Activated CD4-positive, alpha-beta T cell treated with anti-CD3 and anti-CD28 coated beads, Interleukin-2, amount 10 ng/mL, durations not matched to agents 24 days and 14 days (primary cell): ENCODE measurements at regions of chr19 and their contacts with region 1.

Region 1: DNA sequence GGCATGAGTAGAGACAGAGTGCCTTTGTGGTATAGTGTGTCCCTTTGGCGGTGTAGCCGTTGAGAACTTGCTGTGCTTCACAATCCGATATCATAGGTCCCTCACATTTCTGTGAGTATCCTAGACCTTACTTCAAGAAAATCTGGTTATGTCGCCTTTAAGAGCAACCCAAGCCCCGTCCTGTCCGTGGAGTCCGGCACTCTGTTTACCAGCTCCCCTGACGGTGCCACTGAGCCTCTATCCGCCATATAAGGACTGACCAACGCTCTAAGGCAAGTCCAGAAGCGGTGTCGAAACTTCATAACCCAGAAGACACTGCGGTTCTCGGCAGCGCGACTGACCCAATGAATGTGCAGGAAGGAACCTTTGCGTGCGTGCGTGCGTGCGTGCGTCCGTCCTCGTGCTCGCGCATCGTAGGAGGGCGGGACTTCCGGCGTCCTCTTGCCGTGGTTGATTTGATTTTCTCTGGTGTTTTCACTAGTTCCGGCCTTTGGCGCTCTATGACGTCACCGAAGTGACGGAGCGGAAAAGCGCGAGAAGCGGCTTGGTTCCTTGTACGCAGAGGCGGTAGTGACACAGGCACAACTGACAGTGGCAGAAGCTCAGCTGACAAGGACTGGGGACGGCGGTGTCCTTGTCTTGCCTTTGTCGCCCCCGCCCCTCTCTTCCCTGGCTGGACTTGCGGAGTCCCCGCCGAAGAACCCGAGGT is at the starts of genes TRAPPC2B and ZNF547:
- DNase-seq: peak; percentile 100
- H3K4me3 Mint-ChIP-seq: peak within 1 kb of the TSS; percentile 87
- H3K27ac Mint-ChIP-seq: peak within 1 kb of the TSS; percentile 92
- H3K4me1 Mint-ChIP-seq: peaks cover 14% of the 10 kb centered on the region
- H3K27me3 Mint-ChIP-seq: peaks cover 3% of the 10 kb centered on the region
- total RNA-seq, gene TRAPPC2B: 4.1 and 4.3 TPM in 2 replicates
- total RNA-seq, gene ZNF547: 1.3 and 1.6 TPM in 2 replicates

Region 2: DNA sequence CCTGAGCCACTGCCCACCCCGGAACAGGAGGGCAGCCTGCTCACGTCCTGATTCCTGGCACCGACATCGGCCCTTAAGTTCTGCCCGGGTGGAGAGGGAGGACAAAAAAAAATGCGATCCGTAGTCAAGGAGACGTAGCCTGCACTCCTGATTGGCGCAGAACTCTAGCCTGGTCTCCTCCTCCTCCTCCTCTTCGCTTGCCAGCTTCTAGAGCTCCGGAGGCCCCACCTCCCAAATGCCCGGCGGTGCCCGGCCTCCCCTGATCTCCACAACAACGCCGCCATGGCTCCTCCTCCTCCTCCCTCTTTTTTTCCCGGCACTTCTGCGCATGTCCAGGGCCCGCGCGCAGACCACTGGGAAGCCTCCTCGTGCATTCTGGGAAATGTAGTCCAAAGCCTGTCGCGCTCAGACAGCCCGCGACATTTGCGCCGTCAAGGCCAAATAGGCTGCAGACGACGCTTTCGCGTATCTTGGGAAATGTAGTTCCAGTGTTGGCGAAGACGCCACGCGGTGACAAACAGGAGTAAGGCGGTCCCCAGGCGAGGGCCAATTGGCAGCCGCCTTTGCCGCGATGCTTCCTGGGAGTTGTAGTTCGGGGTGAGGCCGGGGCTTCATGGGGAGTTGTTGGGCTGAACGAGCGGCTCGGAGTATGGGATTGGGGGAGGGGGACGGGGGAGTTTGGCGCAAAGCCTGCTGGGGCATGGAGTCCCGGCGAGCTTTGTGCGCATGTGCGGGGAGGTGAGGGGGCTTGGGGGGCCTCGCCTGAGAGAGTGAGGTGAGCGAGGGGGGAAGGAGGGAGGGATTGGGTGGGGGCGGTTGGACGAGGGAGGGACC is 1222.4 kb before region 1 on chr19 and contains the start of gene ZNF444:
- intact Hi-C with region 1: loop called (anchors 5 kb)
- DNase-seq: peak; percentile 100
- H3K4me3 Mint-ChIP-seq: peak within 1 kb of the TSS; percentile 94
- H3K27ac Mint-ChIP-seq: peak within 1 kb of the TSS; percentile 91
- H3K4me1 Mint-ChIP-seq: peaks cover 36% of the 10 kb centered on the region
- H3K27me3 Mint-ChIP-seq: peaks cover 4% of the 10 kb centered on the region
- total RNA-seq, gene ZNF444: 35.5 and 35.7 TPM in 2 replicates

Region 3: DNA sequence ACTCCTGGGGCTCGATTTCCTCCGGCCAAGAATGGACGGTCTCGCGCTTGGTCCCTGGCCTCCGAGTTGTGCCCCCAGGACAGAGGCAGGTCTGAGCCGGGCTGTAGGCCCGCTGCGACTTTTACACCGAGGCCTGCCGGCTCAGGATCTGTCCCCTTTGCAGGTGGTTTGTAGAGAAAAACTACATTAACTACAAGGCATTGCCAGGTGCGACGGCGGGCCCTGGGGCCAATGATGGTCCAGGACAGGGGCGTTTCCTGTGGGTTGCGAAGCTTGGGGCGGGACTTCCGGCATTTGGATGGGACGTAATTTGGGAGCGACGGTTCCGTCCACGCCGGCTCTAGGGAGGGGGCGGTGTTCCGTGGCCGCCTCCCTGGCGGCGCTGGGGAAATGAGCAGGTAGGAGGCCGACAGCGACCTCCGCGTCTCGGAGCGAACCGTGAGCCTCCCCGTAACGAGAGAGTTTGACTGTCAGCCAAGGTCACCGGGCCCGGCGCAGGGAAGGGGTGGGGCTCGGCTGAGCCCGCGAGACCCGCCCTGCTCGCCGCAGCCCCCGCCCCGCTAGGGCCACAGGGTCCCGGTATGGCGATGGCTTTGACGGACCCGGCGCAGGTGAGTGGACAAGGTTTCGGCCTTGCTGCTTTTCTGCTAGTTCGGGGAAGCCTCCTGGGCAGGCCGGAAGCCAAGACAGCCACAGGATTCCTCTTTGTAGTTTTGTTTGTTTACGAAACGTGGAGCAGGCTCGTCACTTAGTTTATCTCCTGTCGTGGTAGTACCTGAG is 122.7 kb before region 1 on chr19 and contains the start of gene ZNF805:
- intact Hi-C with region 1: loop called (anchors 1 kb)
- DNase-seq: peak; percentile 98
- H3K4me3 Mint-ChIP-seq: peak within 1 kb of the TSS; percentile 87
- H3K27ac Mint-ChIP-seq: peak within 1 kb of the TSS; percentile 95
- H3K4me1 Mint-ChIP-seq: peaks cover 21% of the 10 kb centered on the region
- H3K27me3 Mint-ChIP-seq: peaks cover 2% of the 10 kb centered on the region
- total RNA-seq, gene ZNF805: 7.6 and 8.6 TPM in 2 replicates

Region 4: GRCh38 chr19:57320180-57321084 is 42.7 kb before region 1 on chr19 and contains the start of gene ZNF543:
- intact Hi-C with region 1: loop called (anchors 1 kb)
- DNase-seq: peak; percentile 98
- H3K4me3 Mint-ChIP-seq: peak within 1 kb of the TSS; percentile 95
- H3K27ac Mint-ChIP-seq: peak within 1 kb of the TSS; percentile 94
- H3K4me1 Mint-ChIP-seq: peaks cover 24% of the 10 kb centered on the region
- H3K27me3 Mint-ChIP-seq: peaks cover 14% of the 10 kb centered on the region
- total RNA-seq, gene ZNF543: 4.9 and 5.3 TPM in 2 replicates

Region 5: DNA sequence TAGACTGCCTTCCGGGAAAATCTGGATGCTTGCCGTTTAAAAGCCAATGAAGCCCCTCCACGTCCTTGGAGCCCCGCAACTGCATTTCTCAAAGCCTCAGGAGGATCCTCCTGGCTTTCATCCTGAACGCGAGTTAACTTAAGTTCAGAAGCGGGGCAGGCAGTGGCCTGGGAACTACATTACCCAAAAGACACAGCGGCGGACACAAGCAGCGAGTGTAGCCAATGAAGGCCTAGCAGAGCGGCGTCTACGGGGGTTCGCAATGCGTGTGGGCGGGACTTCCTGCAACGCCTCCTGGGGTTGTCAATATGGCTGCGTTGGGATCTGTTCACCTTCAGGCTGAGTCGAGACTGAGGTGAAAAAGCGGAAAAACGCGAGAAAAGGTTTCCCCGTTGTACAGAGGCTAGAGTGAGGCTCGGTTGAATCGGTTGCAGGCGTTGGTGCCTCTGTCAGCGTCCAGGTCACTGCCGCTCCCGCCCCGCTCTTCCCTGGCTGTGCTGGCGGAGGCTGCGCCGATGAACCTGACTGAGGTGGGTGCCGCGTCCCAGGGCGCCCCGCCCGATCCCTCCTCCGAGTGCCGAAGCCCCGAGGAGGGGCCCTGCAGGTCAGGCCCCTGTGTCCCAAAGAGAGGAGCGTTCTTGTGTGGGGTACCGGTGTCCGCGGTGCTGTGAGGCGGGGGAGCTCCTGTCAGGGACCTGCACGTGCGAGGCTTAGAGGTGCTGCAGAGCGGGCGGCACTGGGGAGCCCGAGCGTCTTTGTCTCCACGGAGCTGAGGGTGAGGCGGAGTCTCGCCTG is 47.9 kb after region 1 on chr19 and contains the start of gene ZNF17:
- intact Hi-C with region 1: loop called (anchors 1 kb)
- DNase-seq: peak; percentile 97
- H3K4me3 Mint-ChIP-seq: peak within 1 kb of the TSS; percentile 94
- H3K27ac Mint-ChIP-seq: peak within 1 kb of the TSS; percentile 80
- H3K4me1 Mint-ChIP-seq: peaks cover 14% of the 10 kb centered on the region
- H3K27me3 Mint-ChIP-seq: no peaks in the 10 kb centered on the region
- total RNA-seq, gene ZNF17: 7.4 and 7.8 TPM in 2 replicates